ENCODE measurements at regions of chr6 and their contacts with region 1.

Region 1: DNA sequence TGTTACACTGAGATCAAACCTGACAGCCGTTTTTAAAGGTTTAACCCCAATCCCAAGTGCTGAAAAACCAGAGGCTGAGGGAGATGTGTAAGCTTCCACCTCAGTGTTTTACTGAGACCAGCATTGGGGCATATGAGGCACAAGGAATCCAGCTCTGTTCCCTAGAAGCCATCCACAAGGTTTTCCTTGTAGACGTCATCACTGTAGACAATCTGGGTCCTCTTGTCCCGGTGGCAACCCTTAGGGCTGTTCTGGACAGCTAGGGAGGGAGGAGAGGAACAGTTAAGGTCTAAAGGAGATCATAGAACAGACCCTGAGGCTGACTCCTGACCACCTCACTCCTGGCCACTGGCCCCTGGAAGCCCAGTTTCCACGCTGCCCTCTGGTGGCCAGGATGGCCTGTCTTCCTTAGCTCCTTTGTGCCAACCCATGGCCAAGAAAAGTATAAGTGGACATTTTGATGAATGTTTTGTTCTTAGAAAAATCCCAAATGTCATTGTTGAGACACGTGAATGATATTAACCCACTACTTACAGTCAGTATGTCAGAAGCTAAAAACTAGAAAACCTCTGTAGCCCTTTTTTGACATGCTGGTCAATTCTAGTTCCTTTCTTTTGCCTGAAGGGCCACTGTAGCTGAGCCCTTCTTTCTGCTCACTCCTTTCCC is 6.4 kb downstream of the CFB start:
- DNase-seq: no peak
- ATAC-seq: peak; percentile 71
- H3K4me3 ChIP-seq: no peak overlapping the region
- H3K27ac ChIP-seq: no peak overlapping the region
- H3K4me1 ChIP-seq: no peaks in the 10 kb centered on the region
- H3K27me3 ChIP-seq: no peaks in the 10 kb centered on the region
- CTCF ChIP-seq: peak; percentile 45 to 59 (median 47)
- EP300 ChIP-seq: no peak
- POLR2A ChIP-seq: no peak
- RAD21 ChIP-seq: peak; percentile 36; the same call in 1 of the 2 replicates

Region 2: GRCh38 chr6:31870385-31870921 is 81.8 kb before region 1 on chr6:
- CTCF ChIA-PET with region 1: no interaction called
- POLR2A ChIA-PET with region 1: no interaction called
- RAD21 ChIA-PET with region 1: no interaction called
- SMC1A ChIA-PET with region 1: no interaction called
- in situ Hi-C with region 1: no loop called
- intact Hi-C with region 1: no loop called
- DNase-seq: no peak
- ATAC-seq: peak; percentile 42; the same call in 1 of the 3 replicates
- H3K4me3 ChIP-seq: no peak overlapping the region
- H3K27ac ChIP-seq: no peak overlapping the region
- H3K4me1 ChIP-seq: no peaks in the 10 kb centered on the region
- H3K27me3 ChIP-seq: no peaks in the 10 kb centered on the region
- CTCF ChIP-seq: peak in 2 of 3 experiments; percentile 6 to 22; a peak in 2 of 6 replicates
- EP300 ChIP-seq: no peak
- POLR2A ChIP-seq: no peak
- RAD21 ChIP-seq: no peak

Region 3: DNA sequence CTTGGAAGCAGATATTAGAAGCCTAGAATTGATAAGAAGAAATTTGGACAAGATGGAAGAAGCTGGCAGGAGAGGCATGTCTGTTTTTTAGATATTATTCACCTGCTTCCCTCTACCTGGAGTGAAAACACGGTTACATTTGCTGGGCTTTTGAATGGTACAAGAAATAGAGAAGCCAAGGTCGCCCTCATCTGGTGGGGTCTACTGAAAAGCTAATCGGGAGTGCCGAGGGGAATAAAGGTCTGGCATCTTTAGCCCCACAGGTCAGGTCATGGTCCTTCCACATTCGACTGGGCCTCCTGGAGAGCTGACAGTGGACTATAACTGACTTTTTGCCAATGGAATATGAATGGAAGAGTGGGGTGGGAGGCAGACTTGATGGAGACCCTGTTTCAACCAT is 29.3 kb before region 1 on chr6:
- CTCF ChIA-PET with region 1: interaction called, 16 read pairs
- POLR2A ChIA-PET with region 1: interaction called, 4 read pairs
- RAD21 ChIA-PET with region 1: interaction called, 3 read pairs
- SMC1A ChIA-PET with region 1: interaction called, 9 read pairs
- in situ Hi-C with region 1: no loop called
- intact Hi-C with region 1: no loop called
- DNase-seq: no peak
- ATAC-seq: peak; percentile 90
- H3K4me3 ChIP-seq: no peak overlapping the region
- H3K27ac ChIP-seq: no peak overlapping the region
- H3K4me1 ChIP-seq: no peaks in the 10 kb centered on the region
- H3K27me3 ChIP-seq: no peaks in the 10 kb centered on the region
- CTCF ChIP-seq: peak; percentile 57 to 65 (median 61)
- EP300 ChIP-seq: no peak
- POLR2A ChIP-seq: no peak
- RAD21 ChIP-seq: peak; percentile 79

Region 4: DNA sequence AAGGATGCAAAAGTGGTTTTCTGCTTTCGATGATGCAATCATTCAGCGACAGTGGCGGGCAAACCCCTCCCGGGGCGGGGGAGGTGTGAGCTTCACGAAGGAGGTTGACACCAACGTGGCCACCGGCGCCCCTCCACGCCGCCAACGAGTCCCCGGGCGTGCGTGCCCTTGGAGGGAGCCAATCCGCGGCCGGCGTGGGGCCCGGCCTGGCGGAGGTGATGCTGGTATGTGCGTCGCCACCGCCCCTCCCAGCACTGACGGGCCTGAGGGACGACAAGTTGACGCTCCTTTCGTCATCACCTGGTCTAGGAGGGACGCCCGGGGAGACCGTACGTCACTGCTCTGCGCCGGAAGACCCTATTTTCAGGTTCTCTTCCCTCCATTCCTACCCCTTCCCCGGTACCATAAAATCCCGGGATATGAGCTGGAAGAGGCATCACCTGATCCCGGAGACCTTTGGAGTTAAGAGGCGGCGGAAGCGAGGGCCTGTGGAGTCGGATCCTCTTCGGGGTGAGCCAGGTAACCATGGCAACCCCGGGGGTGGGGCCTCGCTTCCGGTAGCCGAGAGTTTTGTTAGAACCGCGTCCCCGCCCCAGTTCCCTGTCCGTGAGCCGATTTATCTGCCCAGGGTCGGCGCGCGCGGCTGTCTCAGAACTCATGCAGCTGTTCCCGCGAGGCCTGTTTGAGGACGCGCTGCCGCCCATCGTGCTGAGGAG is 19.9 kb after region 1 on chr6 and contains the start of gene DXO:
- CTCF ChIA-PET with region 1: interaction called, 10 read pairs
- POLR2A ChIA-PET with region 1: interaction called, 48 read pairs
- RAD21 ChIA-PET with region 1: interaction called, 4 read pairs
- SMC1A ChIA-PET with region 1: no interaction called
- in situ Hi-C with region 1: no loop called
- intact Hi-C with region 1: no loop called
- DNase-seq: peak; percentile 94
- ATAC-seq: peak; percentile 97
- H3K4me3 ChIP-seq: peak within 1 kb of the TSS; percentile 66
- H3K27ac ChIP-seq: peak within 1 kb of the TSS; percentile 99
- H3K4me1 ChIP-seq: peaks cover 13% of the 10 kb centered on the region
- H3K27me3 ChIP-seq: no peaks in the 10 kb centered on the region
- CTCF ChIP-seq: no peak
- EP300 ChIP-seq: peak; percentile 49 to 51; a peak in 1 of 4 replicates
- POLR2A ChIP-seq: peak; percentile 83
- RAD21 ChIP-seq: no peak
- polyA plus RNA-seq, gene DXO: 4.5 to 6.4 TPM

Measured in GM12878 (cell line).